ENCODE measurements at regions of chr3 and their contacts with region 1.

Region 1: GRCh38 chr3:118736107-118736506 is 298.5 kb downstream of the IGSF11 start:
- DNase-seq: no peak
- ATAC-seq: no peak
- H3K4me3 ChIP-seq: no peak overlapping the region
- H3K4me3 Mint-ChIP-seq: no peak overlapping the region
- H3K27ac ChIP-seq: no peak overlapping the region
- H3K27ac Mint-ChIP-seq: no peak overlapping the region
- H3K4me1 ChIP-seq: no peaks in the 10 kb centered on the region
- H3K4me1 Mint-ChIP-seq: no peaks in the 10 kb centered on the region
- H3K27me3 ChIP-seq: no peaks in the 10 kb centered on the region
- H3K27me3 Mint-ChIP-seq: no peaks in the 10 kb centered on the region
- CTCF ChIP-seq: no peak

Region 2: GRCh38 chr3:118495206-118495605 is 240.9 kb before region 1 on chr3:
- CTCF ChIA-PET with region 1: no interaction called
- POLR2A ChIA-PET with region 1: no interaction called
- intact Hi-C with region 1: loop called in 1 of 2 experiments (anchors 10 kb)
- DNase-seq: no peak
- ATAC-seq: no peak
- H3K4me3 ChIP-seq: no peak overlapping the region
- H3K4me3 Mint-ChIP-seq: no peak overlapping the region
- H3K27ac ChIP-seq: no peak overlapping the region
- H3K27ac Mint-ChIP-seq: no peak overlapping the region
- H3K4me1 ChIP-seq: no peaks in the 10 kb centered on the region
- H3K4me1 Mint-ChIP-seq: no peaks in the 10 kb centered on the region
- H3K27me3 ChIP-seq: no peaks in the 10 kb centered on the region
- H3K27me3 Mint-ChIP-seq: no peaks in the 10 kb centered on the region
- CTCF ChIP-seq: no peak